ENCODE measurements at regions of chr3 and their contacts with region 1.

Region 1: GRCh38 chr3:1540686-1541085 is 447.9 kb downstream of the CNTN6 start:
- DNase-seq: no peak
- ATAC-seq: no peak
- H3K4me3 ChIP-seq: no peak overlapping the region
- H3K27ac ChIP-seq: no peak overlapping the region
- H3K4me1 ChIP-seq: no peaks in the 10 kb centered on the region
- H3K27me3 ChIP-seq: no peaks in the 10 kb centered on the region
- CTCF ChIP-seq: no peak

Region 2: DNA sequence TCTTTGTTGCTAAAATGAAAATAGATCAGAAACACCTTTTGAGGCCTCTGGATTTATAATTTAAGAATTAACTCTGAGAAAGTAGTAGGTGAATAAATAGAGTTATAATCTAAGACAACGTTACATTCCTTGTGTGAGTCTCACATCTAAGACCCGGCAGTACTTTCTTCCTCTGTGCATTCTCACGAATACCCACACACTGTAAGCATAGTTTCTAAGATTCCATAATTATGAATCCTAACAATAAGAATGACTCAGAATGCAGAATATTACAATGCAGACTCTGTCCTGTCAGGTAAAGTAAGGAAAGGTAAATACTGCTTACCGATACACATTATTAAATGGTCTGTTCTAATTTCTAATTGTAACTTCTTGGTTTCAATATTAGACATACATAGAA is 705.6 kb before region 1 on chr3:
- intact Hi-C with region 1: no loop called
- DNase-seq: no peak
- ATAC-seq: no peak
- H3K4me3 ChIP-seq: no peak overlapping the region
- H3K27ac ChIP-seq: no peak overlapping the region
- H3K4me1 ChIP-seq: no peaks in the 10 kb centered on the region
- H3K27me3 ChIP-seq: no peaks in the 10 kb centered on the region
- CTCF ChIP-seq: no peak

Region 3: DNA sequence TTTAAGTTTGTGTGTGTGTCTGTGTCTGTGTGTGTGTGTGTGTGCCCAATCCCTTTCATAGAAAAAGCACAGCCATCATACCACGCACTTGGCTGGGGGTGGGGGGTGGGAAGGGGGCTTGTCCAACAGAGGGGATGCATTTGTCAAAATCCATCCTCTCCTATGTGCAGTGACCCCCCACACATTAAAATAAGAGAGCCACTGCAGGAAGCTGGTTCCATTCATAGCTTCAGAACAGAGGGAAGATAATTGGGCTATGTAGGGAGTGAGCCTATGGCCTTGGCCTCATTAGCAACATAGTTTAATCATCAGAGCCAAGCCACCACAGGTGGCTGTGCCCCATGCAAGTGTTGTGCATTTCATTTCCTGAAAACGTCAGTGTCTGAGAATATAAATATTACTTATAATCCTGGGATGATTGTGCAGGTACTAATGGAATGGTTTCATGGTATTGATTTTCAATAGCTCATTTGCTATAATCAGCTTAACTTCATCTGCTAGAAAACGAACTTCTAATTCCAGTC is 117.1 kb before region 1 on chr3:
- intact Hi-C with region 1: no loop called
- DNase-seq: no peak
- ATAC-seq: no peak
- H3K4me3 ChIP-seq: no peak overlapping the region
- H3K27ac ChIP-seq: no peak overlapping the region
- H3K4me1 ChIP-seq: no peaks in the 10 kb centered on the region
- H3K27me3 ChIP-seq: no peaks in the 10 kb centered on the region
- CTCF ChIP-seq: no peak

Region 4: GRCh38 chr3:1477669-1478068 is 63.0 kb before region 1 on chr3:
- intact Hi-C with region 1: loop called in 1 of 10 experiments (anchors 2 kb)
- DNase-seq: no peak
- ATAC-seq: no peak
- H3K4me3 ChIP-seq: no peak overlapping the region
- H3K27ac ChIP-seq: no peak overlapping the region
- H3K4me1 ChIP-seq: no peaks in the 10 kb centered on the region
- H3K27me3 ChIP-seq: no peaks in the 10 kb centered on the region
- CTCF ChIP-seq: no peak

Measured in heart right ventricle (tissue), 16 donors.